B cell (primary cell): ENCODE measurements at regions of chr6 and their contacts with region 1.

Region 1: DNA sequence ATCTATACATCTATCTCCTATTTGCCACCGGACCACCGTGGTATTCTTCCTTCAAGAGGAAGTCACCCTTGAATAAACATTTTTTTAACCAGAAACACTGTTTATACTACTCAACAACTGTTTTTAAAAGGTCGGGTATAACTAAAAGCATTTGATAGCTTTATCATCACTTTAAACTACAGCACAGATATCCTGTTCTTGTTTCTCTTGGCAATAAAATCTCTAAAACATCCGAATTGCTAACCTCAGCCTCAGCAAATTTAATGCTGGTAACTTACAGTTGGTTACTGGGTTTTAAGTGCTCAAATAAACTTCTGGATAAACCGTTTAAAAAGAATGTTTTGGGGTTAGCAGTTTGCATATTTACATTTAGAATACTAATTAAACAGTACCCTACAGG is 20.4 kb downstream of the ZUP1 start:
- DNase-seq: no peak
- ATAC-seq: no peak
- H3K4me3 ChIP-seq: no peak overlapping the region
- H3K4me3 Mint-ChIP-seq: no peak overlapping the region
- H3K27ac ChIP-seq: no peak overlapping the region
- H3K27ac Mint-ChIP-seq: no peak overlapping the region
- H3K4me1 ChIP-seq: no peaks in the 10 kb centered on the region
- H3K4me1 Mint-ChIP-seq: no peaks in the 10 kb centered on the region
- H3K27me3 ChIP-seq: no peaks in the 10 kb centered on the region
- H3K27me3 Mint-ChIP-seq: no peaks in the 10 kb centered on the region
- CTCF ChIP-seq: no peak

Region 2: GRCh38 chr6:116580198-116580597 is 68.0 kb before region 1 on chr6:
- CTCF ChIA-PET with region 1: no interaction called
- POLR2A ChIA-PET with region 1: no interaction called
- intact Hi-C with region 1: loop called (anchors 5 kb)
- DNase-seq: no peak
- ATAC-seq: no peak
- H3K4me3 ChIP-seq: no peak overlapping the region
- H3K4me3 Mint-ChIP-seq: no peak overlapping the region
- H3K27ac ChIP-seq: no peak overlapping the region
- H3K27ac Mint-ChIP-seq: no peak overlapping the region
- H3K4me1 ChIP-seq: no peaks in the 10 kb centered on the region
- H3K4me1 Mint-ChIP-seq: no peaks in the 10 kb centered on the region
- H3K27me3 ChIP-seq: no peaks in the 10 kb centered on the region
- H3K27me3 Mint-ChIP-seq: no peaks in the 10 kb centered on the region
- CTCF ChIP-seq: no peak

Region 3: GRCh38 chr6:116695401-116695800 is 47.2 kb after region 1 on chr6:
- CTCF ChIA-PET with region 1: no interaction called
- POLR2A ChIA-PET with region 1: no interaction called
- intact Hi-C with region 1: no loop called
- DNase-seq: peak; percentile 65
- ATAC-seq: peak; percentile 67
- H3K4me3 ChIP-seq: no peak overlapping the region
- H3K4me3 Mint-ChIP-seq: no peak overlapping the region
- H3K27ac ChIP-seq: peak overlapping the region in 1 of 2 donors; percentile 71
- H3K27ac Mint-ChIP-seq: no peak overlapping the region
- H3K4me1 ChIP-seq: peaks cover 0 to 10% of the 10 kb centered on the region in 2 donors
- H3K4me1 Mint-ChIP-seq: peaks cover 27% of the 10 kb centered on the region
- H3K27me3 ChIP-seq: no peaks in the 10 kb centered on the region
- H3K27me3 Mint-ChIP-seq: no peaks in the 10 kb centered on the region
- CTCF ChIP-seq: no peak

Region 4: GRCh38 chr6:116954938-116955337 is 306.8 kb after region 1 on chr6:
- CTCF ChIA-PET with region 1: no interaction called
- POLR2A ChIA-PET with region 1: no interaction called
- intact Hi-C with region 1: no loop called
- DNase-seq: no peak
- ATAC-seq: no peak
- H3K4me3 ChIP-seq: no peak overlapping the region
- H3K4me3 Mint-ChIP-seq: no peak overlapping the region
- H3K27ac ChIP-seq: no peak overlapping the region
- H3K27ac Mint-ChIP-seq: no peak overlapping the region
- H3K4me1 ChIP-seq: no peaks in the 10 kb centered on the region
- H3K4me1 Mint-ChIP-seq: no peaks in the 10 kb centered on the region
- H3K27me3 ChIP-seq: no peaks in the 10 kb centered on the region
- H3K27me3 Mint-ChIP-seq: no peaks in the 10 kb centered on the region
- CTCF ChIP-seq: no peak